Calu3 (cell line): ENCODE measurements at regions of chr4 and their contacts with region 1.

Region 1: GRCh38 chr4:139099366-139099982 is 77.5 kb downstream of the ELF2 start:
- DNase-seq: peak; percentile 61
- H3K4me3 Mint-ChIP-seq: no peak overlapping the region
- H3K27ac Mint-ChIP-seq: no peak overlapping the region
- H3K4me1 Mint-ChIP-seq: no peaks in the 10 kb centered on the region
- H3K27me3 Mint-ChIP-seq: no peaks in the 10 kb centered on the region
- CTCF ChIP-seq: no peak

Region 2: GRCh38 chr4:139167774-139168444 is 68.4 kb after region 1 on chr4:
- CTCF ChIA-PET with region 1: interaction called, 3 read pairs
- intact Hi-C with region 1: loop called (anchors 2 kb)
- DNase-seq: peak; percentile 9
- H3K4me3 Mint-ChIP-seq: no peak overlapping the region
- H3K27ac Mint-ChIP-seq: no peak overlapping the region
- H3K4me1 Mint-ChIP-seq: peaks cover 7% of the 10 kb centered on the region
- H3K27me3 Mint-ChIP-seq: no peaks in the 10 kb centered on the region
- CTCF ChIP-seq: peak; percentile 29

Region 3: GRCh38 chr4:139229534-139230039 is 130.1 kb after region 1 on chr4:
- CTCF ChIA-PET with region 1: no interaction called
- intact Hi-C with region 1: loop called (anchors 5 kb)
- DNase-seq: peak; percentile 8
- H3K4me3 Mint-ChIP-seq: no peak overlapping the region
- H3K27ac Mint-ChIP-seq: no peak overlapping the region
- H3K4me1 Mint-ChIP-seq: no peaks in the 10 kb centered on the region
- H3K27me3 Mint-ChIP-seq: no peaks in the 10 kb centered on the region
- CTCF ChIP-seq: no peak